ENCODE measurements at regions of chr16 and their contacts with region 1.

Region 1: GRCh38 chr16:86387461-86388440 is 122.6 kb upstream of the FOXF1 start:
- DNase-seq: peak; percentile 89
- H3K4me3 ChIP-seq: no peak overlapping the region
- H3K27ac ChIP-seq: peak overlapping the region; percentile 89
- H3K4me1 ChIP-seq: peaks cover 64% of the 10 kb centered on the region
- H3K27me3 ChIP-seq: no peaks in the 10 kb centered on the region
- CTCF ChIP-seq: no peak
- POLR2A ChIP-seq: peak; percentile 38

Region 2: GRCh38 chr16:86444261-86444660 is 56.5 kb after region 1 on chr16:
- CTCF ChIA-PET with region 1: interaction called, 3 read pairs
- POLR2A ChIA-PET with region 1: no interaction called
- dilution Hi-C with region 1: no loop called
- intact Hi-C with region 1: loop called (anchors 1 kb)
- DNase-seq: peak; percentile 55
- H3K4me3 ChIP-seq: no peak overlapping the region
- H3K27ac ChIP-seq: no peak overlapping the region
- H3K4me1 ChIP-seq: peaks cover 6% of the 10 kb centered on the region
- H3K27me3 ChIP-seq: peaks cover 9 to 10% of the 10 kb centered on the region in 2 experiments
- CTCF ChIP-seq: no peak
- POLR2A ChIP-seq: no peak

Region 3: DNA sequence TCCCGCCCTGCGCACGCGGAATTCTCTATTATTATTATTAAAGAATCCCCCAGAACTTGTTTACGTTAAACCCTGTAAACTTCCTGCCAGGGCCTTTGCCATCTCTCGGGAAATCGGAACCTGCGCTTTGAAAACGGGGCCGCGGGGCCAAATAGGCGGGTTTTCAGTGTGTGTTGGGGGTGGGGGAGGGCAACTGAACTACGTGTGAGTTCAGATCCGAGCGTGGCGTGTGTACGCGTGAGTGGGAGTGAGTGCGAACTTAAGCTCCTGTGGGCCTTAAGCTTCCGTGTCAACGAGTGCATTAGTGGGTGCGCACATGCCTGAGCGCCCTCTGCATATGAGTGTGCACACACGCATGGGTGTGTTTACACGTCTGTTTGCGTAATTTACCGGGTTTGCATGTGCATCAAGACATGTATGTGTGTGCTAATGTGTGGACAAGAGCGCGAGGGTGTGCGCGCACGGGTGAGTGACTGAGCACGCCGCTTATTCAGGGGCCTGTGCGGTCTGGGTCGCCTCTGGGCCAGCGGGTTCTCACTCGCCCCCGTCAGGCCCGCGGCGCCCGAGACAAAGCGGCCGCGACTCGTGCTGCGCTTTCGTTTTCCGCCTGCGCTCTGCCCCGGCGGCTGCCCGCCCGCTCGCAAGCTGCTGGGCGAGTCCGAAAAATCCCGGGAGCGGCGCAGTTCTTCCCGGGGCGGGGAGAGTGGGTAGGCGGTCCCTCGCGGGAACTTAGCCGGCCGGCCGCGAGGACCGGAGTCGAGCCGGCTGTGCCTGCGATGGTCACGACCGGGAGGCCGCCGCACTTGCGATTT is 121.4 kb after region 1 on chr16:
- CTCF ChIA-PET with region 1: no interaction called
- POLR2A ChIA-PET with region 1: no interaction called
- dilution Hi-C with region 1: no loop called
- intact Hi-C with region 1: loop called (anchors 2 kb)
- DNase-seq: peak; percentile 70
- H3K4me3 ChIP-seq: peak overlapping the region; percentile 10 to 48 (median 15)
- H3K27ac ChIP-seq: no peak overlapping the region
- H3K4me1 ChIP-seq: no peaks in the 10 kb centered on the region
- H3K27me3 ChIP-seq: peaks cover 48 to 78% of the 10 kb centered on the region in 2 experiments
- CTCF ChIP-seq: no peak
- POLR2A ChIP-seq: no peak

Region 4: DNA sequence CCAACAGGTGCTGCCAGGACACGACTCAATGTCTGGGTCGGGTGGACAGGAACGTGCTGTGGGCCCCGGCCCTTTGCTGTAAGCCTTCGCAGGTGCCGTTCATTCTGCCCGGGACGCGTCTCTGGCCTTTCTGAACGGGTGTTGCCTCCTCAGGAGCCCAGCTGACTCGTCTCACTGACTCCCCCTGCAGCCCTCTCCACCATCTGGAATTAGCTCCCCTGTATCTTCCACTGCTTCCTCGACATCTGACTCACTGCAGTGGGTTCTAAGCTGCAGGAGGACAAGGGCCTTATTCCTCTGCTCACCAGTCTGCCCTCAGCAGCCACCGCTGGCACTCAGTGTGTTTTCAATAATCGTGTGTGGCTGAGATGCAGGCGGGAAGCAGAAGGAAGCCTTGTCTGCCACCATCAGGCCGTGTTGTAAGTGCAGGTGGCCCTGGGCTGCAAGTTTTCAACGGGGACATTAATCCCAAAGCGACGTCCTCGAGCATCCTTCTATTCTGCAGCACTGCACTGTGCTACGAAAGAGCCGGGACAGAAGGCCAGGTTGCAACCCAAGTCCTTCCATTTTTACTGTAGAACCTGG is 446.8 kb after region 1 on chr16:
- CTCF ChIA-PET with region 1: no interaction called
- POLR2A ChIA-PET with region 1: no interaction called
- dilution Hi-C with region 1: no loop called
- intact Hi-C with region 1: loop called (anchors 10 kb)
- DNase-seq: peak; percentile 41
- H3K4me3 ChIP-seq: no peak overlapping the region
- H3K27ac ChIP-seq: no peak overlapping the region
- H3K4me1 ChIP-seq: peaks cover 7% of the 10 kb centered on the region
- H3K27me3 ChIP-seq: no peaks in the 10 kb centered on the region
- CTCF ChIP-seq: peak in 1 of 2 donors; percentile 29
- POLR2A ChIP-seq: no peak

Region 5: DNA sequence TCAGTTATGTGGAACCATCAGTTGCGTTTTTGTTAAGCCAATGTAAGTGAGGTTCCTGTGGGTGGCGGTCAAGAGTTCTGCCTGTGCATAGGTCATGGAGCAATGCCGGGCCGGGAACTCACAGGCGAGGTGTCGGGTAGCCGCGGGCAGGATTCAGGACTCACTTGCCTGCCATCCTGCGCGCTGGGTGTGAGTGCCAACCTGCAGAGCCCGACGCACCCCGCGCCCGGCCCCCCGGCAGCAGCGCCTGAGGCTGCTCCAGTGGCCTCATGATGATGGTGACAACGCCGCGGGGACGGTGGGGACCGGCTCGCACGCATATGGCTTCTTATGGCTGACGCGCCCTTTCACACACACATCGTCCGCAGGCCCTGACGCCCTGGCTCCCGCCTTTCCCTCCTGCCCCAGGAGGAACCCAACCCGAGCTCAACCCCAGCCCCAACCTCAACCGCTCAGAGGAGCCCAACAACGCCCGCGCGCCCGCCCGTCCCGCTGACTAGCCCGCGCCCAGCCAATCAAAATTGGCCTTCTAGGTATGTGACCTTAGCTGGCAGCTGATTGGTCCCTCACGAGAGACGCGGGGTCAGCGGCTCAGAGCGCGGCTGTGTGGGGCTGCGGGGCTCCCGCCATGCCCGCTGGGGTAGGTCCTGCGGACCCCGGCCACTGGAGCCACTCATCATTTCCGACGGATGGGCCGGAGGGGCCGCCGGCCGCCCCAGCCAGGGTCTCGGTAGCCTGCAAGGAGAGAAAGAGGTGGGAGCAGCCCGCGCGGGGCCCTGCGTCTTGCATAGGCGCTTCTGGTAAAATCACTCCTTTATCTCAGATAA is 929.4 kb after region 1 on chr16 and contains the start of gene C16orf95:
- CTCF ChIA-PET with region 1: no interaction called
- POLR2A ChIA-PET with region 1: no interaction called
- dilution Hi-C with region 1: no loop called
- intact Hi-C with region 1: loop called (anchors 5 kb)
- DNase-seq: peak; percentile 95
- H3K4me3 ChIP-seq: peak within 1 kb of the TSS; percentile 91 to 99 (median 94)
- H3K27ac ChIP-seq: peak within 1 kb of the TSS; percentile 84
- H3K4me1 ChIP-seq: peaks cover 7% of the 10 kb centered on the region
- H3K27me3 ChIP-seq: no peaks in the 10 kb centered on the region
- CTCF ChIP-seq: peak; percentile 41 to 60
- POLR2A ChIP-seq: peak; percentile 82
- total RNA-seq, gene C16orf95: 4.8 and 6.6 TPM in 2 replicates

Measured in endothelial cell of umbilical vein (primary cell).